PC-3 (cell line): ENCODE measurements at regions of chr18 and their contacts with region 1.

Region 1: GRCh38 chr18:31819106-31819924 is 58.6 kb upstream of the SLC25A52 start:
- DNase-seq: peak; percentile 48
- ATAC-seq: peak; percentile 70
- H3K4me3 ChIP-seq: no peak overlapping the region
- H3K27ac ChIP-seq: no peak overlapping the region
- H3K4me1 ChIP-seq: no peaks in the 10 kb centered on the region
- H3K27me3 ChIP-seq: no peaks in the 10 kb centered on the region
- CTCF ChIP-seq: peak; percentile 66

Region 2: DNA sequence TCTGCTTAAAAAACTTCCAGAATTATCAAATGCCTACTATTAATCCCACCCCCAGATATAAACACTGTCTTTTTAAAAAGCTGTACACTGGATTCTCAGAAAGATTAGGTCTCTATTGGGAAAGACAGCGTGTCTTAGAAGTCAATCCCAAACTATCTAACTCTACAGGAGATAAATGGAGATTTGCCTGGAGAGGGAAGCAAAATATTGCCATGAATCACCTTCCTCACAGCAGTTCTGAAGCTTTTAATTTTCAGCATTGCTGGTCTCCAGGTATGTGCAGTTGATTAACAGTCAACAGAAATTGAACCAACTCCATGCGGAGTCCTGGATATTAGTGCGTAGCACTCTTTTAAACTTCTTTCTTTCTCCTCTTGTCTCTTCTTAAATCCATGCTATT is 899.0 kb before region 1 on chr18:
- CTCF ChIA-PET with region 1: no interaction called
- POLR2A ChIA-PET with region 1: no interaction called
- intact Hi-C with region 1: no loop called
- DNase-seq: no peak
- ATAC-seq: no peak
- H3K4me3 ChIP-seq: no peak overlapping the region
- H3K27ac ChIP-seq: no peak overlapping the region
- H3K4me1 ChIP-seq: peaks cover 4% of the 10 kb centered on the region; the same call in 1 of the 2 replicates
- H3K27me3 ChIP-seq: no peaks in the 10 kb centered on the region
- CTCF ChIP-seq: no peak

Region 3: GRCh38 chr18:31555971-31556747 is 263.2 kb before region 1 on chr18:
- CTCF ChIA-PET with region 1: interaction called, 5 read pairs
- POLR2A ChIA-PET with region 1: no interaction called
- intact Hi-C with region 1: loop called (anchors 1 kb)
- DNase-seq: peak; percentile 64
- ATAC-seq: peak; percentile 64
- H3K4me3 ChIP-seq: no peak overlapping the region; the same call in 1 of the 2 replicates
- H3K27ac ChIP-seq: no peak overlapping the region
- H3K4me1 ChIP-seq: peaks cover 7% of the 10 kb centered on the region; the same call in 1 of the 2 replicates
- H3K27me3 ChIP-seq: no peaks in the 10 kb centered on the region
- CTCF ChIP-seq: peak; percentile 65

Region 4: DNA sequence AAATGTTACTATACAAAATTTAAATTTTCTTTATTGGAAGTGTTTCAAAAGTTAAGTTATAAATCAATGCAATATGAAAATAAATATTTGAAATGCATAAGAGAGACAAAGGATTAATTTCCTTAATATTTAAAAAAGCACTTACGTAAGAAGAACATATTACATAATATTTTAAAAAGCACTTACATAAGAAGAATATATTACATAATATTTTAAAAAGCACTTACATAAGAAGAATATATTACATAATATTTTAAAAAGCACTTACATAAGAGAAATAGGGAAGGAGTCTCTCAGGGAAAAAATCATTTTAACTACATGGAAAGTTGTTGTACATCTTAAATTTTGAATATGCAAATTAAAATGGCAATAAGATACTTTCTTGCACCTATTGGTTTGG is 117.6 kb before region 1 on chr18:
- CTCF ChIA-PET with region 1: no interaction called
- POLR2A ChIA-PET with region 1: no interaction called
- intact Hi-C with region 1: no loop called
- DNase-seq: no peak
- ATAC-seq: no peak
- H3K4me3 ChIP-seq: no peak overlapping the region
- H3K27ac ChIP-seq: no peak overlapping the region
- H3K4me1 ChIP-seq: no peaks in the 10 kb centered on the region
- H3K27me3 ChIP-seq: no peaks in the 10 kb centered on the region
- CTCF ChIP-seq: no peak

Region 5: GRCh38 chr18:31741097-31741735 is 78.1 kb before region 1 on chr18:
- CTCF ChIA-PET with region 1: no interaction called
- POLR2A ChIA-PET with region 1: interaction called, 3 read pairs
- intact Hi-C with region 1: loop called (anchors 1 kb)
- DNase-seq: peak; percentile 47
- ATAC-seq: peak; percentile 20; the same call in 1 of the 2 replicates
- H3K4me3 ChIP-seq: no peak overlapping the region
- H3K27ac ChIP-seq: no peak overlapping the region
- H3K4me1 ChIP-seq: no peaks in the 10 kb centered on the region
- H3K27me3 ChIP-seq: no peaks in the 10 kb centered on the region
- CTCF ChIP-seq: peak; percentile 65